ENCODE measurements at regions of chr10 and their contacts with region 1.

Region 1: GRCh38 chr10:22550732-22551131 is 163.6 kb downstream of the PIP4K2A start:
- DNase-seq: peak; percentile 46 to 76 (median 61)
- ATAC-seq: peak; percentile 73
- H3K4me3 ChIP-seq: no peak overlapping the region
- H3K4me3 Mint-ChIP-seq: no peak overlapping the region
- H3K27ac ChIP-seq: no peak overlapping the region
- H3K27ac Mint-ChIP-seq: peak overlapping the region in 7 of 9 donors; percentile 10 to 83 (median 61)
- H3K4me1 ChIP-seq: no peaks in the 10 kb centered on the region
- H3K4me1 Mint-ChIP-seq: peaks cover 0 to 21% (median 13%) of the 10 kb centered on the region in 7 donors
- H3K27me3 ChIP-seq: no peaks in the 10 kb centered on the region
- H3K27me3 Mint-ChIP-seq: no peaks in the 10 kb centered on the region

Region 2: GRCh38 chr10:22228943-22229801 is 321.6 kb before region 1 on chr10:
- CTCF ChIA-PET with region 1: no interaction called
- POLR2A ChIA-PET with region 1: no interaction called
- intact Hi-C with region 1: loop called in 1 of 2 experiments (anchors 10 kb)
- DNase-seq: peak; percentile 74 to 94 (median 92)
- ATAC-seq: peak; percentile 95
- H3K4me3 ChIP-seq: peak overlapping the region; percentile 85
- H3K4me3 Mint-ChIP-seq: peak overlapping the region; percentile 84 to 99 (median 94)
- H3K27ac ChIP-seq: peak overlapping the region; percentile 70
- H3K27ac Mint-ChIP-seq: peak overlapping the region; percentile 96 to 100 (median 99)
- H3K4me1 ChIP-seq: peaks cover 6 to 8% of the 10 kb centered on the region in 2 donors
- H3K4me1 Mint-ChIP-seq: peaks cover 11 to 27% (median 15%) of the 10 kb centered on the region in 7 donors
- H3K27me3 ChIP-seq: no peaks in the 10 kb centered on the region
- H3K27me3 Mint-ChIP-seq: peaks cover 0 to 20% (median 5%) of the 10 kb centered on the region in 5 donors

Region 3: GRCh38 chr10:22259280-22259679 is 291.5 kb before region 1 on chr10:
- CTCF ChIA-PET with region 1: no interaction called
- POLR2A ChIA-PET with region 1: interaction called, 5 read pairs
- intact Hi-C with region 1: loop called in 1 of 2 experiments (anchors 5 kb)
- DNase-seq: peak in 2 of 9 donors; percentile 23 to 25
- ATAC-seq: peak; percentile 55
- H3K4me3 ChIP-seq: no peak overlapping the region
- H3K4me3 Mint-ChIP-seq: peak overlapping the region in 2 of 10 donors; percentile 0 to 29
- H3K27ac ChIP-seq: no peak overlapping the region
- H3K27ac Mint-ChIP-seq: peak overlapping the region in 1 of 9 donors; percentile 37
- H3K4me1 ChIP-seq: peaks cover 0 to 14% of the 10 kb centered on the region in 2 donors
- H3K4me1 Mint-ChIP-seq: peaks cover 6 to 43% (median 18%) of the 10 kb centered on the region in 7 donors
- H3K27me3 ChIP-seq: no peaks in the 10 kb centered on the region
- H3K27me3 Mint-ChIP-seq: peaks cover 14 to 47% (median 25%) of the 10 kb centered on the region in 5 donors

Region 4: DNA sequence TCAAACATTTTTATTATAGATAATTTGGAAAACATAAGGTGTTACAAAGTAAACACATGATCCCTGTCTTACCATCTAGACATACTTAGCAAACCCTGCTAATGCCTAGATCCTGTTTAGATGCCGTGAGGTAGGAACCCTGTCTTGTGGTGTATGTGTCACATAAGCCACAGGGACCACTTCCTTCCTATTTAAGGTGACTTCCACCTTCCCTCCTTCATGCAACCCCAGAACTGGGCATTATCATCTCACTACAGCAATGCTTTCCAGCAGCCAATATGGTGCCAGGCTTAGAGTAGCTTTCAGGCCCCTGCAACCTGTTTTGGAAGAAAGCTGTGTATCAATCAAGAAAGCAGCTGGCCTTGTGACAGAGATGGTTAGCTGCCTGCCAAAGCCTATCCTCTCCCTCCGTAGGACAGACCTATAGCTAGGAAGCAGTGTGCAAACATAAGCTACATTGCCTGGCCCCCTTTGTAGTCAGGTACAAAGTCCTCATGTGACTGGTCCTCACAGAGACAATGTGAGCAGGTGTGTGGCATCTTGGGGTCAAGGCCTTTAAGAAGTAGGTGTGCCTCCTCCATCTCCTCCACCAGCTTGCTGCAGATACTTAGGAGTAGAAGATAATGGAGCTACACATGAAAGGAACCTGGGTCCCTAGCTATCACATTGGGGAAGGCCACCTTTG is 58.7 kb before region 1 on chr10:
- CTCF ChIA-PET with region 1: no interaction called
- POLR2A ChIA-PET with region 1: no interaction called
- intact Hi-C with region 1: no loop called
- DNase-seq: peak in 7 of 9 donors; percentile 13 to 44 (median 32)
- ATAC-seq: peak; percentile 75
- H3K4me3 ChIP-seq: no peak overlapping the region
- H3K4me3 Mint-ChIP-seq: peak overlapping the region in 5 of 10 donors; percentile 15 to 78 (median 29)
- H3K27ac ChIP-seq: no peak overlapping the region
- H3K27ac Mint-ChIP-seq: peak overlapping the region in 1 of 9 donors; percentile 48
- H3K4me1 ChIP-seq: peaks cover 16 to 19% of the 10 kb centered on the region in 2 donors
- H3K4me1 Mint-ChIP-seq: peaks cover 14 to 23% (median 18%) of the 10 kb centered on the region in 7 donors
- H3K27me3 ChIP-seq: no peaks in the 10 kb centered on the region
- H3K27me3 Mint-ChIP-seq: peaks cover under 1 to 23% (median 13%) of the 10 kb centered on the region in 5 donors

Region 5: GRCh38 chr10:22849077-22849805 is 298.5 kb after region 1 on chr10:
- CTCF ChIA-PET with region 1: no interaction called
- POLR2A ChIA-PET with region 1: no interaction called
- intact Hi-C with region 1: loop called in 1 of 2 experiments (anchors 1 kb)
- DNase-seq: peak in 5 of 9 donors; percentile 8 to 26 (median 15)
- ATAC-seq: no peak
- H3K4me3 ChIP-seq: no peak overlapping the region
- H3K4me3 Mint-ChIP-seq: peak overlapping the region in 9 of 10 donors; percentile 46 to 79 (median 71)
- H3K27ac ChIP-seq: no peak overlapping the region
- H3K27ac Mint-ChIP-seq: peak overlapping the region in 7 of 9 donors; percentile 11 to 82 (median 58)
- H3K4me1 ChIP-seq: peaks cover 0 to 7% of the 10 kb centered on the region in 2 donors
- H3K4me1 Mint-ChIP-seq: peaks cover 2 to 17% (median 13%) of the 10 kb centered on the region in 7 donors
- H3K27me3 ChIP-seq: no peaks in the 10 kb centered on the region
- H3K27me3 Mint-ChIP-seq: peaks cover 0 to 6% (median 0%) of the 10 kb centered on the region in 5 donors

Region 6: GRCh38 chr10:23067939-23068775 is 517.4 kb after region 1 on chr10:
- CTCF ChIA-PET with region 1: no interaction called
- POLR2A ChIA-PET with region 1: no interaction called
- intact Hi-C with region 1: loop called in 1 of 2 experiments (anchors 10 kb)
- DNase-seq: peak; percentile 23 to 66 (median 48)
- ATAC-seq: peak; percentile 78
- H3K4me3 ChIP-seq: no peak overlapping the region
- H3K4me3 Mint-ChIP-seq: no peak overlapping the region
- H3K27ac ChIP-seq: no peak overlapping the region
- H3K27ac Mint-ChIP-seq: no peak overlapping the region
- H3K4me1 ChIP-seq: no peaks in the 10 kb centered on the region
- H3K4me1 Mint-ChIP-seq: peaks cover 0 to 2% (median 0%) of the 10 kb centered on the region in 7 donors
- H3K27me3 ChIP-seq: no peaks in the 10 kb centered on the region
- H3K27me3 Mint-ChIP-seq: peaks cover 0 to 6% (median 2%) of the 10 kb centered on the region in 5 donors